ENCODE measurements at regions of chr14 and their contacts with region 1.

Region 1: DNA sequence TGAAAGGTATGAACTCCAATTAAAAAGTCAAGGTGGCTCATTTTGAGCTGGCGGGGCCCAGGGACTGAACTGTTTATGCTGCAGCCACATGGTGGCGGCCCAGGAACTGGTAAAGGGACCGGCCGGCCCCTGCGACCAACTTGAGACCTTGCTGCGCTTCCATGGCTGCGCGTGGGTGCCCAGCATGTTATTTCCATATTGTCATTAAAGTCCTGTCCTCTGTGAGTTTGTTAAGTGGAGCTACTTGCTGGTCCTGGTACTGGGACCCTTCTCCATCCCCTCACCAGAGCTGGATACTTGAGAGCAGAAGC is 62.3 kb downstream of the BEGAIN start:
- DNase-seq: peak in 4 of 9 experiments; percentile 10 to 61 (median 42)
- ATAC-seq: no peak
- H3K4me3 ChIP-seq: no peak overlapping the region
- H3K4me3 Mint-ChIP-seq: no peak overlapping the region
- H3K27ac ChIP-seq: no peak overlapping the region
- H3K27ac Mint-ChIP-seq: no peak overlapping the region
- H3K4me1 ChIP-seq: no peaks in the 10 kb centered on the region
- H3K4me1 Mint-ChIP-seq: no peaks in the 10 kb centered on the region
- H3K27me3 ChIP-seq: no peaks in the 10 kb centered on the region
- H3K27me3 Mint-ChIP-seq: no peaks in the 10 kb centered on the region
- CTCF ChIP-seq: peak; percentile 45

Region 2: DNA sequence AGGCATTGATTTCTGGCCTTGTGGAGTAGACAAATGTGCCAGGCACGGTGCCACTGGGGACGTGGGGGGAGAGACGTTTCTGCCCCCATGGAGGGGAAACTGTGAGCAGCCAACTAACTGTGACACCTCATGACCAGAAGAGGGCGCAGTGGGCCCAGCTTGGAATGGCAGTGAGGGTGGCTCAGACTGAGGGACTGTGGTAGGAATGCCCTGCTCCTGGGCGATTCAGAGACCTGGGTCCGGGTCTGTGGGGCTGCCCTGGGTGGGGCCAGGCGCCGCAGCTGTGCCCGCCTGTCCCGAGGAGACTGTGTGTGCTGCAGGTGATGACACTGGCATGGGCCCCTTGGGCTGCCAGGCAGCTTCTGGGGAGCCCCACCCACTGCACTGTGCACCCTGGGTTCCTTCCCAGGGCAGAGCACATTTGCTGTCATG is 141.1 kb before region 1 on chr14:
- CTCF ChIA-PET with region 1: interaction called, 3 read pairs
- POLR2A ChIA-PET with region 1: no interaction called
- intact Hi-C with region 1: loop called in 1 of 2 experiments (anchors 10 kb)
- DNase-seq: peak; percentile 38 to 79 (median 67)
- ATAC-seq: peak; percentile 93
- H3K4me3 ChIP-seq: no peak overlapping the region
- H3K4me3 Mint-ChIP-seq: no peak overlapping the region
- H3K27ac ChIP-seq: no peak overlapping the region
- H3K27ac Mint-ChIP-seq: no peak overlapping the region
- H3K4me1 ChIP-seq: peaks cover 10% of the 10 kb centered on the region
- H3K4me1 Mint-ChIP-seq: peaks cover 16% of the 10 kb centered on the region
- H3K27me3 ChIP-seq: no peaks in the 10 kb centered on the region
- H3K27me3 Mint-ChIP-seq: no peaks in the 10 kb centered on the region
- CTCF ChIP-seq: peak; percentile 82